Activated CD4-positive, alpha-beta T cell treated with anti-CD3 and anti-CD28 coated beads for 36 hours (primary cell): ENCODE measurements at regions of chr3 and their contacts with region 1.

Region 1: GRCh38 chr3:66500576-66501482 is at the start of gene LRIG1:
- DNase-seq: peak; percentile 99
- ATAC-seq: peak; percentile 97
- H3K4me3 Mint-ChIP-seq: peak within 1 kb of the TSS; percentile 96
- H3K27ac Mint-ChIP-seq: peak within 1 kb of the TSS; percentile 87
- H3K4me1 Mint-ChIP-seq: peaks cover 52% of the 10 kb centered on the region
- H3K27me3 Mint-ChIP-seq: peaks cover 9% of the 10 kb centered on the region
- total RNA-seq, gene LRIG1: 19.1 to 22.7 TPM

Region 2: GRCh38 chr3:66220602-66221377 is 280.0 kb before region 1 on chr3 and contains the start of gene SLC25A26:
- CTCF ChIA-PET with region 1: no interaction called
- POLR2A ChIA-PET with region 1: no interaction called
- intact Hi-C with region 1: loop called in 1 of 2 experiments (anchors 1 kb)
- DNase-seq: peak; percentile 99
- ATAC-seq: peak; percentile 96
- H3K4me3 Mint-ChIP-seq: peak within 1 kb of the TSS; percentile 86
- H3K27ac Mint-ChIP-seq: peak within 1 kb of the TSS; percentile 92
- H3K4me1 Mint-ChIP-seq: peaks cover 48% of the 10 kb centered on the region
- H3K27me3 Mint-ChIP-seq: no peaks in the 10 kb centered on the region
- total RNA-seq, gene SLC25A26: 14.2 to 22.7 TPM

Region 3: DNA sequence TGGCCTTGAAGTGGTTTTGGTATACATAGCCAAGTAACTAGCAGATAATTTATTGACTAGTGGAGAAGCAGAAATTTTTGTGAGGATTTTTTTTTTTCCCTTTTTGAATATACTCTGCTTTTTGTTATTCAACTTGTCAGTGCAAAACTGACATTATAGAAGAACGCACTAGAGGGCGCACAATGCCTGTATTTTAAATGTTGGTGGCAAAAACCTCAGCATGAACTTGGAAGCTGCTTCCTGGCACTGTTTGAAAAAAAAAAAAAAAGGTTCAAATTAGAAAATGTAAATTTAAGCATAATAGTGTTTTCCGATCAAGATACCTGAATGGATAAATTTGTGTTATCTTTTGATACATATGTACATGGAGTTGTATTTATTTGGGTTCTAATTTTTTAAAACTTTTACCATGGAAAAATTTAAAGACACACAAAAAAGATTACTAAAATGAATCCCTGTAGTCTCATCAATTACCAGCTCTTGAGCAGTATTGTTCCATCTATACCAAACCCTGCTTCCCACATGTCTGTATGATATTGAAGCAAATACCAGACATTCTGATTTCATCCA is 224.0 kb before region 1 on chr3:
- CTCF ChIA-PET with region 1: no interaction called
- POLR2A ChIA-PET with region 1: no interaction called
- intact Hi-C with region 1: loop called in 1 of 2 experiments (anchors 2 kb)
- DNase-seq: peak; percentile 69
- ATAC-seq: no peak
- H3K4me3 Mint-ChIP-seq: no peak overlapping the region
- H3K27ac Mint-ChIP-seq: no peak overlapping the region
- H3K4me1 Mint-ChIP-seq: peaks cover 24% of the 10 kb centered on the region
- H3K27me3 Mint-ChIP-seq: no peaks in the 10 kb centered on the region

Region 4: DNA sequence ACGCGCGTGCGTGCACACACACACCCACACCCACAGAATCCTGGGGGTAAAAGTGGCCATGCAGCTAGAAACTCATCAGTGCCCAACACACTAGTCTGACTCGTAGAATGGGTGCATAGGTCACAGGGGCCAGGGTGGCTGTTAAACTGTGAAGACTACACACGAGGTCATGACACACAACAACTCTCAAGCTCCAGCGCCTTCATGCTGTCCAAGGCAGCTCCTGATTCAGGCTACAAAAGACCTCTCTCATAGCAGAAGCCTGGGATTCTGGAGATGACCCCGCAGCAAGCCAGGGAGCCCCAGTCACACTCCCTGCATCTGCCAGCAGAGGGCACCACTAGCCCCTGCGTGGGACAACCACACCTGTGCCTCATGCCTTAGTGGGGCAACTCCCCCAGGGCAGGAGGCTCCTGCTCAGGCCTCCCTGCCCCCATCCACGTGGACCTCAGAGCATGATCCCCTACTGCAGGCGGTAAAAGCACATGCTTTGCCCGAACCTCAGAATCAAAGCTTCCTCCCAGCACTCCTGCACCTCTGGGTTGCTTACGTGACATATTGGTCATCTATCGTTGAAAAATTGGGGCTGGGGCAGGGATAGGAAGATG is 93.1 kb before region 1 on chr3:
- CTCF ChIA-PET with region 1: interaction called, 4 read pairs
- POLR2A ChIA-PET with region 1: no interaction called
- intact Hi-C with region 1: loop called (anchors 1 to 2 kb)
- DNase-seq: peak; percentile 85
- ATAC-seq: peak; percentile 97
- H3K4me3 Mint-ChIP-seq: no peak overlapping the region
- H3K27ac Mint-ChIP-seq: no peak overlapping the region
- H3K4me1 Mint-ChIP-seq: no peaks in the 10 kb centered on the region
- H3K27me3 Mint-ChIP-seq: no peaks in the 10 kb centered on the region

Region 5: GRCh38 chr3:66998113-66998903 is 497.5 kb after region 1 on chr3 and contains the start of gene KBTBD8:
- CTCF ChIA-PET with region 1: no interaction called
- POLR2A ChIA-PET with region 1: no interaction called
- intact Hi-C with region 1: loop called in 1 of 2 experiments (anchors 1 kb)
- DNase-seq: peak; percentile 98
- ATAC-seq: peak; percentile 95
- H3K4me3 Mint-ChIP-seq: peak within 1 kb of the TSS; percentile 88
- H3K27ac Mint-ChIP-seq: peak within 1 kb of the TSS; percentile 92
- H3K4me1 Mint-ChIP-seq: peaks cover 30% of the 10 kb centered on the region
- H3K27me3 Mint-ChIP-seq: peaks cover 7% of the 10 kb centered on the region
- total RNA-seq, gene KBTBD8: 8.3 to 9.2 TPM